Natural killer cell (primary cell): ENCODE measurements at regions of chr3 and their contacts with region 1.

Region 1: GRCh38 chr3:18725668-18726407 is 300.7 kb upstream of the SATB1 start:
- DNase-seq: peak in 1 of 2 donors; percentile 72
- ATAC-seq: peak; percentile 75 to 81 (median 80)
- H3K4me3 ChIP-seq: peak overlapping the region; percentile 7
- H3K4me3 Mint-ChIP-seq: peak overlapping the region; percentile 88
- H3K27ac ChIP-seq: peak overlapping the region; percentile 77
- H3K27ac Mint-ChIP-seq: peak overlapping the region; percentile 94 to 97
- H3K4me1 ChIP-seq: peaks cover 33% of the 10 kb centered on the region
- H3K4me1 Mint-ChIP-seq: peaks cover 61 to 68% of the 10 kb centered on the region in 2 donors
- H3K27me3 ChIP-seq: no peaks in the 10 kb centered on the region
- H3K27me3 Mint-ChIP-seq: no peaks in the 10 kb centered on the region
- CTCF ChIP-seq: no peak

Region 2: DNA sequence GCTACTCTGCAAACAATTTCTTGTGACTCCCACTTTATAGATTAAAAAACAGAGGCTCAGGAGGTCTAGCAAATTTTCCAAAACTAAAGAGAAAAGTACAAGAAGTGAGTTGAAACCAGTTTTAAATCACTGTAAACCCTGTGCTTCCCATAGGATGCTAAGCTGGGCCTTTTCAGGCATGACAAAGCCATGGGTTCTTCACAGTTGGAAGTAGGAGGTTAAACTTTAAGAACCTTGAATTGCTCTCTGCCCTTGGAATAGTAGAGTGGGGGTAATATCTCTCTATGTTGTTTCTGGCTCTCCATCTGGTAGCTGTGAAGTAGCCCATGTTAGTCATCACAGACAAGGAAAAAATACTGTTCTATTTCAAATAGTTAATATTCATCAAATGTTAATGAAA is 107.1 kb before region 1 on chr3:
- intact Hi-C with region 1: no loop called
- DNase-seq: no peak
- ATAC-seq: no peak
- H3K4me3 ChIP-seq: no peak overlapping the region
- H3K4me3 Mint-ChIP-seq: no peak overlapping the region
- H3K27ac ChIP-seq: no peak overlapping the region
- H3K27ac Mint-ChIP-seq: no peak overlapping the region
- H3K4me1 ChIP-seq: no peaks in the 10 kb centered on the region
- H3K4me1 Mint-ChIP-seq: peaks cover 0 to 4% of the 10 kb centered on the region in 2 donors
- H3K27me3 ChIP-seq: no peaks in the 10 kb centered on the region
- H3K27me3 Mint-ChIP-seq: no peaks in the 10 kb centered on the region
- CTCF ChIP-seq: no peak

Region 3: DNA sequence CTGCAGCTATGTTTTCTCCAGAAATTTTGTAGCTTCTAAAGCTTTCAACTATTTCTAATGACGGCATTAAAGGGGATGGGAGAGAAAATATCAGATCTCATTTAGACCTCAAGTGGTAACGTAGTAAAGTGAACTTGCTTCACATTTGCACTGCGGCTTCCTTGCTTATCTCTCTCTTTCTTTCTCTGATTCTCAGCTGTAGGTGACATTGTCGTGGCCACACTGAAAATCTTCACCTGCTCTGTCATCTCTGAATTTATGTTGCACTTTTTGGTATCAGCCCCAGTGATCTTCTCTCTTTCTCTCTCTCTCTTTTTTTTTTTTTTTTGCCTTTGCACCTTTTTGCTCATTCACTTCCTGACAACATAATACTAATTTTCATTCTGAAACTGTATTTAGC is 46.6 kb before region 1 on chr3:
- intact Hi-C with region 1: loop called (anchors 5 kb)
- DNase-seq: peak; percentile 18 to 74
- ATAC-seq: peak; percentile 85 to 91 (median 91)
- H3K4me3 ChIP-seq: no peak overlapping the region
- H3K4me3 Mint-ChIP-seq: peak overlapping the region; percentile 60
- H3K27ac ChIP-seq: peak overlapping the region; percentile 70
- H3K27ac Mint-ChIP-seq: peak overlapping the region; percentile 71 to 80
- H3K4me1 ChIP-seq: peaks cover 12% of the 10 kb centered on the region
- H3K4me1 Mint-ChIP-seq: peaks cover 61 to 65% of the 10 kb centered on the region in 2 donors
- H3K27me3 ChIP-seq: no peaks in the 10 kb centered on the region
- H3K27me3 Mint-ChIP-seq: no peaks in the 10 kb centered on the region
- CTCF ChIP-seq: no peak

Region 4: GRCh38 chr3:18758047-18758704 is 32.3 kb after region 1 on chr3:
- intact Hi-C with region 1: no loop called
- DNase-seq: peak in 1 of 2 donors; percentile 92
- ATAC-seq: peak; percentile 90 to 99 (median 97)
- H3K4me3 ChIP-seq: no peak overlapping the region
- H3K4me3 Mint-ChIP-seq: no peak overlapping the region
- H3K27ac ChIP-seq: no peak overlapping the region
- H3K27ac Mint-ChIP-seq: peak overlapping the region; percentile 17 to 27
- H3K4me1 ChIP-seq: no peaks in the 10 kb centered on the region
- H3K4me1 Mint-ChIP-seq: peaks cover 13 to 19% of the 10 kb centered on the region in 2 donors
- H3K27me3 ChIP-seq: no peaks in the 10 kb centered on the region
- H3K27me3 Mint-ChIP-seq: no peaks in the 10 kb centered on the region
- CTCF ChIP-seq: peak; percentile 90